ENCODE measurements at regions of chr3 and their contacts with region 1.

Region 1: GRCh38 chr3:126134219-126134975 is 46.0 kb downstream of the ALDH1L1 start:
- DNase-seq: peak; percentile 28 to 32
- ATAC-seq: peak; percentile 82 to 92; a peak in 5 of 6 replicates
- H3K4me3 ChIP-seq: no peak overlapping the region
- H3K27ac ChIP-seq: no peak overlapping the region
- H3K4me1 ChIP-seq: no peaks in the 10 kb centered on the region
- CTCF ChIP-seq: peak; percentile 66
- EP300 ChIP-seq: no peak
- POLR2A ChIP-seq: no peak
- RAD21 ChIP-seq: peak; percentile 84 to 86

Region 2: GRCh38 chr3:126124148-126124868 is 10.1 kb before region 1 on chr3:
- CTCF ChIA-PET with region 1: interaction called, 60 read pairs
- POLR2A ChIA-PET with region 1: no interaction called
- DNase-seq: no peak
- ATAC-seq: no peak
- H3K4me3 ChIP-seq: no peak overlapping the region
- H3K27ac ChIP-seq: no peak overlapping the region
- H3K4me1 ChIP-seq: no peaks in the 10 kb centered on the region
- CTCF ChIP-seq: no peak
- EP300 ChIP-seq: no peak
- POLR2A ChIP-seq: no peak
- RAD21 ChIP-seq: no peak

Region 3: GRCh38 chr3:126197854-126198584 is 63.6 kb after region 1 on chr3:
- CTCF ChIA-PET with region 1: interaction called, 15 read pairs
- POLR2A ChIA-PET with region 1: no interaction called
- DNase-seq: peak; percentile 63 to 72
- ATAC-seq: peak; percentile 95 to 97
- H3K4me3 ChIP-seq: no peak overlapping the region
- H3K27ac ChIP-seq: no peak overlapping the region
- H3K4me1 ChIP-seq: no peaks in the 10 kb centered on the region
- CTCF ChIP-seq: peak; percentile 40
- EP300 ChIP-seq: no peak
- POLR2A ChIP-seq: no peak
- RAD21 ChIP-seq: peak in 1 of 2 experiments; percentile 44; a peak in 2 of 5 replicates

Region 4: DNA sequence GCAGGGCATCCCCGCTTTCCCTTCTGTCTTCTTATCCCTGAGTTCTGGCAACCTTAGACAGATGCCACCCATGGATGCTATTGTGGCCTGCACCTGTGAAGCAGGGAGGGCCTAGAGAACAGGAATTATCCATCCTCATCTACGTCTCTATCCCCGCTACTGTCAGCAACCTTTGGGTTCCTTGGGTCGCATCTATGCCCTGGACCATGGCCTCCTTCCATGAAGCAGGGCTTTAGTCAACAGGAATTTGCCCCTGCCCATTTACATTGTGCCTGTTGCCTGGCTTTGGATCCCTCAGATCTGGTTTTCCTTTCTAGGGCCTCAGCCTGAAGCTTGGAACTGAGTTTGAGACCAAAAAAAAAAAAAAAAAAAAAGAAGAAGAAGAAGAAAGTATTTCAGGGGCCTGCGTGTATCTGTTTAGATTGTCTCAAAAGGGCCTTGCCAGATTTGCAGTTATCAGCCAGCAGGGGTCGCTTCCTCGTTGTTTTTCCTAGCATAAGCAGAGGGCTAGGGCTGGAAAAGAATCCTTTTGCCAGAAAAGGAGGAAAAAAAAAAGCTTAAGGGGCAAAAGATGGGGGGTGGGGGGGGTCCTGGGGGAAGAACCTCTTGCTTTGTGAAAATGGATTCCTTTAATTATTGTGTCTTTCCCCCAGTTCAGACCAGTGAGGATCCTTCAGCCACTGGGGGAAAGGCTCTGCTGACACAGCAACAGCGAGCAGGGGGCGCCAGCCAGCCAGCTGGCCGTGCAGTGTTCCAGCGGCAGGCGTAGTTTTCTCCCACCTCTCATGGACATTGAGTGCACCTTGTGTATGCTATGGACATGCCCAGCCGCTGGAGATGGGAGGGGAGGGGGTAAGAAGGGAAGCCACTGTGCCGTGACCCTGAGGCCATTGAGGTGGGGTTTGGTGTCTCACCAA is 111.7 kb after region 1 on chr3:
- CTCF ChIA-PET with region 1: interaction called, 11 read pairs
- POLR2A ChIA-PET with region 1: no interaction called
- DNase-seq: peak; percentile 33 to 54
- ATAC-seq: peak; percentile 89 to 95
- H3K4me3 ChIP-seq: no peak overlapping the region
- H3K27ac ChIP-seq: no peak overlapping the region
- H3K4me1 ChIP-seq: no peaks in the 10 kb centered on the region
- CTCF ChIP-seq: peak; percentile 67
- EP300 ChIP-seq: no peak
- POLR2A ChIP-seq: no peak
- RAD21 ChIP-seq: peak; percentile 58 to 62

Region 5: GRCh38 chr3:126389112-126389793 is 254.9 kb after region 1 on chr3:
- CTCF ChIA-PET with region 1: interaction called, 110 read pairs
- POLR2A ChIA-PET with region 1: no interaction called
- DNase-seq: peak; percentile 50 to 81
- ATAC-seq: peak; percentile 98 to 99
- H3K4me3 ChIP-seq: peak overlapping the region; percentile 36
- H3K27ac ChIP-seq: peak overlapping the region; percentile 70 to 84; a peak in 5 of 6 replicates
- H3K4me1 ChIP-seq: no peaks in the 10 kb centered on the region
- CTCF ChIP-seq: peak; percentile 96
- EP300 ChIP-seq: no peak
- POLR2A ChIP-seq: no peak
- RAD21 ChIP-seq: peak; percentile 69 to 91